Lower lobe of right lung (tissue), 2 donors: ENCODE measurements at regions of chr12 and their contacts with region 1.

Region 1: DNA sequence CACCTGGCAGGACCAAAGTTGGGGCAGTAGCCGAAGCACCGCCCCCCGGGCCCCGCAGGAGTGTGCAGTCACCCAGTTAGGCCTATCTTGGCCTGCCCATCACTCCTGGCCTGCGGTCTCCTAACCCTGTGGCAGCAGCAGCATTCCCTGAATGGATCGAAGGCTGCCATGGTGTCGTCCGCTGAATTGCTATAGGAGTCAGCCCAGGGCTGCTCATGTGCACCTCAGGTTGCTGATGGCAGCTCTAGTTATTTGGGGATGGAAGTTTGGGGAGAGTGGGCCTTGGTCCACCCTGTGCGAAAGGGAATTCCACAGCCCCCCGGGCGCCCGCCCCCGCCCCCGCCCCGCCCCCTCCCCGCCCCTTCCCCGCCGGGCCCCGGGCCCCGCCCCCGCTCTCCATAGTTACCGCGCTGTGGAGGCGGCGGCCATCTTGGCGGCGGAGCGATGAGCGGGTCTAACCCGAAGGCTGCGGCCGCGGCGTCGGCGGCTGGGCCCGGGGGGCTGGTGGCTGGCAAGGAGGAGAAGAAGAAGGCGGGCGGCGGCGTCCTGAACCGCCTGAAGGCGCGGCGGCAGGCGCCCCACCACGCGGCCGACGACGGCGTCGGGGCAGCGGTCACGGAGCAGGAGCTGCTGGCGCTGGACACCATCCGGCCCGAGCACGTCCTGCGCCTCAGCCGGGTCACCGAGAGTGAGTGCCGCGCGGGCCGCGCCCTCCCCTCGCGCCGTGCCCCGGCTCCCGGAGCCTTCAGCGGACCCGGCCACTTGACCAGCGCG is at the start of gene UNC119B:
- DNase-seq: peak; percentile 85
- ATAC-seq: peak; percentile 92 to 94
- H3K4me3 ChIP-seq: peak within 1 kb of the TSS; percentile 93
- H3K27ac ChIP-seq: peak within 1 kb of the TSS; percentile 92
- H3K4me1 ChIP-seq: peaks cover 35% of the 10 kb centered on the region
- H3K27me3 ChIP-seq: no peaks in the 10 kb centered on the region
- CTCF ChIP-seq: no peak
- total RNA-seq, gene UNC119B: 27.1 TPM

Region 2: GRCh38 chr12:120209851-120210250 is 500.4 kb before region 1 on chr12:
- intact Hi-C with region 1: no loop called
- DNase-seq: no peak
- ATAC-seq: no peak
- H3K4me3 ChIP-seq: no peak overlapping the region
- H3K27ac ChIP-seq: no peak overlapping the region
- H3K4me1 ChIP-seq: no peaks in the 10 kb centered on the region
- H3K27me3 ChIP-seq: no peaks in the 10 kb centered on the region
- CTCF ChIP-seq: no peak

Region 3: GRCh38 chr12:120580787-120581723 is 129.2 kb before region 1 on chr12 and contains the start of gene POP5:
- intact Hi-C with region 1: loop called (anchors 10 kb)
- DNase-seq: peak; percentile 97
- ATAC-seq: peak; percentile 95 to 96
- H3K4me3 ChIP-seq: peak within 1 kb of the TSS; percentile 86
- H3K27ac ChIP-seq: peak within 1 kb of the TSS; percentile 74
- H3K4me1 ChIP-seq: peaks cover 41% of the 10 kb centered on the region
- H3K27me3 ChIP-seq: no peaks in the 10 kb centered on the region
- CTCF ChIP-seq: no peak
- total RNA-seq, gene POP5: 39.5 TPM